Panc1 (cell line): ENCODE measurements at regions of chr15 and their contacts with region 1.

Region 1: DNA sequence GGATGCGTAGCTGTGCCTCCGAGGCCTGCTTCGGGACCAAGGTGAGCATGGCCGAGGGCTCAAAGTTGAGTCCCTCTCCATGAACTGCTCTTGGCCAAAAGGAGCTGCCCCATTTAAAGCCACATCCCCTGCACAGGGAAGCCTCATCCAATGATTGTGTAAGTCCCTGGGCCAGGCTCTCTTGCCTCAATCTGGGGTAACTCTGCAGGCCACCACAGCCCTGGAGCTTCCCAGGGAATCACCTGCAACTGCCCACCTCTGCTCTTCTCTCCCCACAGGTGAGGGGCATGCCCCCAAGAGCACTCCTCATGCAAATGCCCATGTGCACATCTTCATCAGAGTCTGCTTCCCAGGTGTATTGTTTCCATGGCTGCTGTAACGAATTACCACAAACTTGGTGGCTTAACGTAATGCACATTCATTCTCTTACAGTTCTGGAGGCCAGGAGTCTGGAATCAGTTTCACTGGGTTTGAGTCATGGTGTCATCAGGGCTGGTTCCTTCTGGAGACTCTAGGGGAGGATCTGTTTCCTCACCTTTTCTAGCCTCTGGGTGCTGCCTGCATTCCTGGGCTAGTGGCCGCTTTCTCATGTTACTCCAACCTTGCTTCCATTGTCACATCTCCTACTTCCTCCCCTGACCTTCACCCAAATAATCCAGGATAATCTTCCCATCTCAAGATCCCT is 25.0 kb upstream of the LOXL1 start:
- DNase-seq: no peak
- ATAC-seq: no peak
- H3K4me3 ChIP-seq: no peak overlapping the region
- H3K27ac ChIP-seq: no peak overlapping the region
- H3K4me1 ChIP-seq: no peaks in the 10 kb centered on the region
- H3K27me3 ChIP-seq: no peaks in the 10 kb centered on the region; the same call in 1 of the 2 replicates
- CTCF ChIP-seq: no peak

Region 2: DNA sequence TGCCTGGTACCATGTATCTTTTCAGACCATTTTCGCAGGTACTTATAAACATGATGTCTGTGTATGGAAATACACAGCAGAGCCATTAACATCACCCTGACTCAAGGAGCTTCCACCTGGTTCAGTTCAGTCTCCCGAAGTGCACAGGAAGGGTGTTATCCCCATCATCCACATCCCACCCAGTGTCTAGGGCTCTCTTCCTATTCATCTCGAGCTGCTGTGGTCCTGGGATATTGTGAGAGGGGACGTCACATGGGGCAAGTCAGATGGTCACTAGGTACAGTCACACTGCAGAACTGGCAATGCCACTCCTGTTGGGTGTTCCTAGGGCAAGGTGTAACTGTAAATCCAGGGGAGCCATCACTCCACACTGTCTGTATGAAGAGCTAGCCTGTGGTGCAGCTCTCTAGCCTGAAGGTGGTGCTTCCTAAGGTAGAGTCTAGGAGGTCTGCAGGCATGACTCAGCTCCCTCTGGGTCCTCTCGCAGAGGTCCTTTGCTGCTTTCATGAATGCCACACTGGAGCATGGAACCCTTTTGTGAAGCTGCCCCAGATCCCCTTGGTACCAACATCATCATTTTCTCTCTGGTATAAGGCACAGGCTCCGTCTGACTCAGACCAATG is 243.0 kb after region 1 on chr15:
- CTCF ChIA-PET with region 1: no interaction called
- POLR2A ChIA-PET with region 1: interaction called, 13 read pairs
- in situ Hi-C with region 1: no loop called
- intact Hi-C with region 1: no loop called
- DNase-seq: no peak
- ATAC-seq: peak; percentile 87
- H3K4me3 ChIP-seq: no peak overlapping the region
- H3K27ac ChIP-seq: no peak overlapping the region
- H3K4me1 ChIP-seq: no peaks in the 10 kb centered on the region
- H3K27me3 ChIP-seq: peaks cover 5% of the 10 kb centered on the region; the same call in 1 of the 2 replicates
- CTCF ChIP-seq: no peak